CD4-positive, alpha-beta memory T cell (primary cell): ENCODE measurements at regions of chr9 and their contacts with region 1.

Region 1: GRCh38 chr9:121322037-121322775 is 47.8 kb downstream of the STOM start:
- DNase-seq: no peak
- H3K4me3 ChIP-seq: no peak overlapping the region
- H3K4me3 Mint-ChIP-seq: peak overlapping the region in 1 of 8 donors; percentile 24
- H3K27ac ChIP-seq: no peak overlapping the region
- H3K27ac Mint-ChIP-seq: peak overlapping the region in 1 of 7 donors; percentile 47
- H3K4me1 ChIP-seq: peaks cover 24% of the 10 kb centered on the region
- H3K4me1 Mint-ChIP-seq: peaks cover 14 to 29% (median 20%) of the 10 kb centered on the region in 4 donors
- H3K27me3 ChIP-seq: no peaks in the 10 kb centered on the region
- H3K27me3 Mint-ChIP-seq: no peaks in the 10 kb centered on the region

Region 2: DNA sequence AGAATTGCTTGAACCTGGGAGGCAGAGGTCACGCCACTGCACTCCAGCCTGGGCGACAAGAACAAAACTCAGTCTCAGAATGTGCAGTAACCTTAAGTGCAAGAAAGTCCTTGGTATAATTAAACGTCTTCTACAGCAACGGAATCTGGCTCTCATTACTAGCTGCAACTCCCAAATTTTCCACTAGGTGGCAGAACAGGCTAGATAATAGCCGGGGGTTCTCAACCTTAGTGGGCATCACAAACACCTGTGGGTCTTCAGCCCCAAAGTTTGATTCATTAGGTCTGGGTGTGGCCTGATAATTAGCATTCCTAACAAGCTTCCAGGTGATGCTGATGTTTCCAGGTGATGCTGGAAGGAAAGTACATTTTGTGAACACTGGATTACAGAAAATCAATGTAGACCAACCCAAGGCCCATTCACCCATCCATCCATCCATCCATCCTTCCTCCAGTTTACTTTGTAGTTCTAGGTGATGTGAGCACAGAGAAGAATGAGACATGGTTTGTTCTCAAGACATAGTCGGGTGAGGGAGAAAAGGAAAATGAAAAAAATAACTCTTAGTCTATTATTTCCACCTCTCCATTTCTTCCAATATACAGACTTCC is 566.3 kb before region 1 on chr9:
- CTCF ChIA-PET with region 1: interaction called, 3 read pairs
- POLR2A ChIA-PET with region 1: no interaction called
- intact Hi-C with region 1: loop called (anchors 1 kb)
- DNase-seq: peak; percentile 58 to 75 (median 63)
- H3K4me3 ChIP-seq: no peak overlapping the region
- H3K4me3 Mint-ChIP-seq: no peak overlapping the region
- H3K27ac ChIP-seq: no peak overlapping the region
- H3K27ac Mint-ChIP-seq: peak overlapping the region in 6 of 7 donors; percentile 13 to 79 (median 49)
- H3K4me1 ChIP-seq: no peaks in the 10 kb centered on the region
- H3K4me1 Mint-ChIP-seq: peaks cover 0 to 6% (median 5%) of the 10 kb centered on the region in 4 donors
- H3K27me3 ChIP-seq: no peaks in the 10 kb centered on the region
- H3K27me3 Mint-ChIP-seq: no peaks in the 10 kb centered on the region

Region 3: DNA sequence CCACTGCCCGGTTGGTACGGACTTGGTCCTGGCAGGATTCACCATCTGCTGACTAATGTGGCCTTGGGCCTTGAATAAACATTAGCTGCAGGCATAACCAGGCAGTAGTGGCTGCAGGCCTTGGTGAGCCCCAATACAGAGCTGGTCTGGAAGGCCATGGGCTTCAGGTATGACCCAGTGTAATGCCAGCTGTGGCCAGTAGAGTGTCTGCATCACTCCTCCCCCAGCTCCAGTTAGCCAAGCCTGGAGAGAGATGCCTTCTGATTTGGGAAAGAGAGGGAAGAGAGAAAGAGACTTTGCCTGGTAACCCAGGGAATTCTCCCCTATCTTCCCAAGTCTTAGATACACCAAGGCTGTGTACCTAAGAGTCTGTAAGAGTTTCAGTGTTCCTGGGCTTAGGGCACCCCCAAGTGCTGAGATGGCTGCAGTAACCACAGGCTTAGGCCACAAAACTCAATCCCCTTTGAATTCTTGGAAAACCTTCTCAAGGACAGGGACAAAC is 266.5 kb before region 1 on chr9:
- CTCF ChIA-PET with region 1: no interaction called
- POLR2A ChIA-PET with region 1: no interaction called
- intact Hi-C with region 1: no loop called
- DNase-seq: no peak
- H3K4me3 ChIP-seq: no peak overlapping the region
- H3K4me3 Mint-ChIP-seq: no peak overlapping the region
- H3K27ac ChIP-seq: no peak overlapping the region
- H3K27ac Mint-ChIP-seq: no peak overlapping the region
- H3K4me1 ChIP-seq: peaks cover 4% of the 10 kb centered on the region
- H3K4me1 Mint-ChIP-seq: peaks cover 0 to 2% (median under 1%) of the 10 kb centered on the region in 4 donors
- H3K27me3 ChIP-seq: no peaks in the 10 kb centered on the region
- H3K27me3 Mint-ChIP-seq: no peaks in the 10 kb centered on the region

Region 4: DNA sequence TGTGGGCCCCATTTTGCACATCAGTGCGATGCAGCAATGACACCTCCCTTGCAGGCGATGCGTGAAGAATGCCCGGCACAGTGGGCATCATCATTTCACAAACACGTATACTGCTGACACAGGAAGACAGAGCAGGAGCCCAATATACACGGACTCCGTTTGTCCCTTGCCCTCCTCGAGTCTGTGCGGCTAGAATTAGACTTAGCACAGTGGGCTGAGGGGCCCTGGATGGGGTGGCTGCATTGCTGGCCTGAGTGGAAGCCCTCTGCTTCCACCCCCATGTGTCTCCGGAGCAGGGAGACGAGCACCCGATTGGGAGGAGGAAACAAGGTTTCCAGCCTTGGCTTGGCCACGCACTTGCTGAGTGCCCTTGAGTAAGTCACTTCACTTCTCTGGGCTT is 13.4 kb before region 1 on chr9:
- CTCF ChIA-PET with region 1: interaction called, 28 read pairs
- POLR2A ChIA-PET with region 1: no interaction called
- intact Hi-C with region 1: no loop called
- DNase-seq: no peak
- H3K4me3 ChIP-seq: no peak overlapping the region
- H3K4me3 Mint-ChIP-seq: no peak overlapping the region
- H3K27ac ChIP-seq: no peak overlapping the region
- H3K27ac Mint-ChIP-seq: no peak overlapping the region
- H3K4me1 ChIP-seq: no peaks in the 10 kb centered on the region
- H3K4me1 Mint-ChIP-seq: no peaks in the 10 kb centered on the region
- H3K27me3 ChIP-seq: no peaks in the 10 kb centered on the region
- H3K27me3 Mint-ChIP-seq: no peaks in the 10 kb centered on the region

Region 5: DNA sequence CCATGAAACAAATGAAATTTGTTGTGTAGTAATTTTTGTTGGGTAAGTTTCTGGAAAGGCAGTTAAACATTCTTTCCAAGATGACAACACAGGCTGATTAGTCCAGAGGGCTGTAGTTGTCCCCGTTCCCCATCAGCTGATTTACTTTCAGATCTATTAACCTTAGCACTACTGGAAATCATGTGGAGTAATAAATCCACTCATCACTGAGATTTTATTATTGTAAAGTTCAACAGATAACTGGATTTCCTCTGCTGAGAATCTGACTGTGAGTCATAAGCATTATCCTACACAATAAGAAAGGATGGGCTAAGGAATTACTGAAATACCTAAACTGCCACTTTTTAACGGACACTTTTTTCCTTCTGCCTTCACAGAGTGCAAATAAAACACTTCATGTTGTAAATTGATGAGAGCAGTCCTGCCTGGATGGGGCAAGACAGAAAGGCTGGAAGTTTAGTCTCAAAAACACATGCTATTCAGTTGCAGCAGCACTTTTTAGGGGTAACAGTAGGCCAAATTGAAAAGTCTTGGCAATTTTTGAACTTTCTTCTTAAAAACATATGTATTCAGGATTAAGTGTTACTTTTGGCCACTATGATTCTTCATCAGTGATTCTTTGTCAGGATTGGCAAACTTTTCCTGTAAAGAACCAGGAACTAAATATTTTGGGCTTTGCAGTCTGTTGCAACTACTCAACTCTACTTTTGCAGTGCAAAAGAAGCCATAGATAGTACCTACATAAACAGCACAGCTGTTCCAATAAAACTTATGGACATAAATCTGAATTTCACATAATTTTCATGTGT is 40.8 kb after region 1 on chr9:
- CTCF ChIA-PET with region 1: interaction called, 61 read pairs
- POLR2A ChIA-PET with region 1: no interaction called
- intact Hi-C with region 1: no loop called
- DNase-seq: no peak
- H3K4me3 ChIP-seq: no peak overlapping the region
- H3K4me3 Mint-ChIP-seq: peak overlapping the region in 6 of 8 donors; percentile 13 to 57 (median 38)
- H3K27ac ChIP-seq: no peak overlapping the region
- H3K27ac Mint-ChIP-seq: peak overlapping the region in 6 of 7 donors; percentile 1 to 47 (median 44)
- H3K4me1 ChIP-seq: peaks cover 92% of the 10 kb centered on the region
- H3K4me1 Mint-ChIP-seq: peaks cover 58 to 89% (median 74%) of the 10 kb centered on the region in 4 donors
- H3K27me3 ChIP-seq: no peaks in the 10 kb centered on the region
- H3K27me3 Mint-ChIP-seq: no peaks in the 10 kb centered on the region

Region 6: GRCh38 chr9:121383715-121384114 is 61.5 kb after region 1 on chr9:
- CTCF ChIA-PET with region 1: interaction called, 272 read pairs
- POLR2A ChIA-PET with region 1: no interaction called
- intact Hi-C with region 1: no loop called
- DNase-seq: no peak
- H3K4me3 ChIP-seq: no peak overlapping the region
- H3K4me3 Mint-ChIP-seq: no peak overlapping the region
- H3K27ac ChIP-seq: no peak overlapping the region
- H3K27ac Mint-ChIP-seq: no peak overlapping the region
- H3K4me1 ChIP-seq: no peaks in the 10 kb centered on the region
- H3K4me1 Mint-ChIP-seq: no peaks in the 10 kb centered on the region
- H3K27me3 ChIP-seq: no peaks in the 10 kb centered on the region
- H3K27me3 Mint-ChIP-seq: peaks cover 2 to 3% of the 10 kb centered on the region in 2 donors

Region 7: GRCh38 chr9:121405899-121406298 is 83.7 kb after region 1 on chr9:
- CTCF ChIA-PET with region 1: interaction called, 330 read pairs
- POLR2A ChIA-PET with region 1: no interaction called
- intact Hi-C with region 1: no loop called
- DNase-seq: no peak
- H3K4me3 ChIP-seq: no peak overlapping the region
- H3K4me3 Mint-ChIP-seq: no peak overlapping the region
- H3K27ac ChIP-seq: no peak overlapping the region
- H3K27ac Mint-ChIP-seq: no peak overlapping the region
- H3K4me1 ChIP-seq: no peaks in the 10 kb centered on the region
- H3K4me1 Mint-ChIP-seq: no peaks in the 10 kb centered on the region
- H3K27me3 ChIP-seq: no peaks in the 10 kb centered on the region
- H3K27me3 Mint-ChIP-seq: peaks cover 0 to 2% of the 10 kb centered on the region in 2 donors

Region 8: DNA sequence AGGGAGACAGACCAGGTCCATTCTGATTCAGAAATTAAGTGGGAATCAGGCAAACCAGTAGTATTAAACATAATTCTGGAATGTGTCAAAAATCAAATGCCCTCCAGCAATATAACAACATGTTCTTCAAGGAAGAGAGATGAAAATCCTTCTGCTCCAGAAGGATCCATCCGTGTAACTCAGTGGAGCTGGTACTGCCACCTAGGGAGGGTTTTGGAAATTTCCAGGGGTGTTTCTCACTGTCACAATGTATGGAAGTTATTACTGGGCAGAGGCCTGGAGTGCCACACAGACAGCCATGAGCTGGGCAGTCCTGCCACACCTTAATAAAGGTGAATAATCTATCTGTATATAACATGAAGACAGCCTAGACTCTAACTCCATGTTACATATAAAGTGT is 683.4 kb after region 1 on chr9:
- CTCF ChIA-PET with region 1: no interaction called
- POLR2A ChIA-PET with region 1: no interaction called
- intact Hi-C with region 1: no loop called
- DNase-seq: no peak
- H3K4me3 ChIP-seq: no peak overlapping the region
- H3K4me3 Mint-ChIP-seq: no peak overlapping the region
- H3K27ac ChIP-seq: no peak overlapping the region
- H3K27ac Mint-ChIP-seq: no peak overlapping the region
- H3K4me1 ChIP-seq: no peaks in the 10 kb centered on the region
- H3K4me1 Mint-ChIP-seq: peaks cover 0 to 1% (median 0%) of the 10 kb centered on the region in 4 donors
- H3K27me3 ChIP-seq: no peaks in the 10 kb centered on the region
- H3K27me3 Mint-ChIP-seq: no peaks in the 10 kb centered on the region